Panc1 (cell line): ENCODE measurements at regions of chr11 and their contacts with region 1.

Region 1: GRCh38 chr11:90468923-90469322 is 246.1 kb upstream of the CHORDC1 start:
- DNase-seq: no peak
- ATAC-seq: no peak
- H3K4me3 ChIP-seq: no peak overlapping the region
- H3K27ac ChIP-seq: no peak overlapping the region
- H3K4me1 ChIP-seq: no peaks in the 10 kb centered on the region
- H3K27me3 ChIP-seq: no peaks in the 10 kb centered on the region
- CTCF ChIP-seq: no peak

Region 2: DNA sequence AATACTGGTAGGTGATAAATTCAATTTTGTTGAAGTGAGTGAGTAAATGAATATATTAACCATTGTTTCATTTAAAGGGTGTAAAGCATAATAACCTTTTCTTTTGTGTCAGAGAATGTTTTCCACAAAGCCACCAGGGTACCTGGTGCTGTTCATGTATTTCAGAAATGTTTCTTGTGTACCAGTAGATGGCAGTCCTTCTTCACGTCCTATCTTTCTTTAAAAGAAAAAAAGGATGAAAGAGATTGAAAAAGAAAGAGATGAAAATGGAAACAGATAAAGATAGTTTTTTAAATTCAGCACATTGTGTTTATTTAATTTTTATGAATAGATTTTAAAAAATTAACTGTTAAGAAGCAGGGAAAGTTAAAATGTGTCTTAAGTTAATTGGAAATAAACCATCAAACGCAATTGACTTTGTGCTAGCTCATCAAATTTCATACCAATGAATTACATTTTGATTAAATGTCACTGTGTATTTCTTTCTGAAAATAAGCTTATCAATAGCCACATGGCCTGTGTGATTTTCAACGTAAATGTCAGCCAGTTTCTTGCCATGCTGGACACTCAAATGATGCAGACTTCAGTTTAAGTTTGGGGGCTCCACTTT is 180.6 kb before region 1 on chr11:
- CTCF ChIA-PET with region 1: no interaction called
- POLR2A ChIA-PET with region 1: no interaction called
- in situ Hi-C with region 1: no loop called
- intact Hi-C with region 1: loop called (anchors 5 kb)
- DNase-seq: peak; percentile 5
- ATAC-seq: no peak
- H3K4me3 ChIP-seq: no peak overlapping the region
- H3K27ac ChIP-seq: no peak overlapping the region
- H3K4me1 ChIP-seq: no peaks in the 10 kb centered on the region
- H3K27me3 ChIP-seq: no peaks in the 10 kb centered on the region
- CTCF ChIP-seq: peak; percentile 76; the same call in 1 of the 2 replicates

Region 3: GRCh38 chr11:90373971-90374370 is 95.0 kb before region 1 on chr11:
- CTCF ChIA-PET with region 1: no interaction called
- POLR2A ChIA-PET with region 1: no interaction called
- in situ Hi-C with region 1: no loop called
- intact Hi-C with region 1: no loop called
- DNase-seq: no peak
- ATAC-seq: no peak
- H3K4me3 ChIP-seq: no peak overlapping the region
- H3K27ac ChIP-seq: no peak overlapping the region
- H3K4me1 ChIP-seq: no peaks in the 10 kb centered on the region
- H3K27me3 ChIP-seq: no peaks in the 10 kb centered on the region
- CTCF ChIP-seq: no peak

Region 4: GRCh38 chr11:90493379-90493778 is 24.5 kb after region 1 on chr11:
- CTCF ChIA-PET with region 1: no interaction called
- POLR2A ChIA-PET with region 1: interaction called, 15 read pairs
- in situ Hi-C with region 1: no loop called
- intact Hi-C with region 1: no loop called
- DNase-seq: no peak
- ATAC-seq: no peak
- H3K4me3 ChIP-seq: no peak overlapping the region
- H3K27ac ChIP-seq: no peak overlapping the region
- H3K4me1 ChIP-seq: no peaks in the 10 kb centered on the region
- H3K27me3 ChIP-seq: no peaks in the 10 kb centered on the region
- CTCF ChIP-seq: no peak